ENCODE measurements at regions of chr18 and their contacts with region 1.

Region 1: GRCh38 chr18:78268226-78268988 is 711.2 kb upstream of the SALL3 start:
- DNase-seq: no peak
- ATAC-seq: no peak
- H3K4me3 ChIP-seq: no peak overlapping the region
- H3K27ac ChIP-seq: no peak overlapping the region
- H3K4me1 ChIP-seq: no peaks in the 10 kb centered on the region
- H3K27me3 ChIP-seq: no peaks in the 10 kb centered on the region
- CTCF ChIP-seq: no peak

Region 2: DNA sequence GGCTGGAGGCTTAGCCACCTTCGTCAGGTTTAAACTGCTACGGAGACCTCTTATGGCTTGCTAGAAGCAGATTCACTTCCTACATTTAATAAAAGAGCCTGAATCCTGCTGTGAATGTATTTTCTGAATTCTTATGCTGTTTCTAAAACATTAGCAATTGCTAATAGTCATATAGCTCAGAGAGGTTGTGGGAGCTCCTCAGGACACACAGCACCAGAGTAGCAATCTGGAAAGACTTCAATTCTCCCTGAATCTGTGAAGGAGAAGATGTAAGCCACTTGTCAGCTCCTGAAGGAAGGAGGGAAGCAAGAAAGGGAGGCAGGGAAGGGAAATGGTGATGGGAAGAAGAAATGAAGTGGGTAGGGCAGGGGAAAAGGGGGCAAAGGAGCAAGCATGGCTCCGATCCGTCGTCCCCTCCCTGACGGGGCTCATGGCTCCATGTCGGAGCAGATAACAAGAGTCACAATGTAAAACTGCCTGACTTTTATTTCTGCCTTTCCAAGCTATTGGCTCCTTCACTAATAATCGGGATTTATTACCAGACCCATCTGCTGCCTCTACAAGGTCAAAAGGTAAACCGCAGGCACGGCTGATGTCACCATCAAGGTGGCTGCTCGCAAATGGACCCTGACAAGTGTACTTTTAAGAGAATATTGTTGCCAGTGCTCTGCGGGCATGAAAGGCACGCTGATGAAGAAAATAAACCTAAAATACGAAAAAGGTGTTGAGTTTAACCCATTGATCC is 55.2 kb after region 1 on chr18:
- intact Hi-C with region 1: loop called in 1 of 2 experiments (anchors 10 kb)
- DNase-seq: no peak
- ATAC-seq: no peak
- H3K4me3 ChIP-seq: no peak overlapping the region
- H3K27ac ChIP-seq: no peak overlapping the region
- H3K4me1 ChIP-seq: no peaks in the 10 kb centered on the region
- H3K27me3 ChIP-seq: no peaks in the 10 kb centered on the region
- CTCF ChIP-seq: no peak

Region 3: GRCh38 chr18:78813936-78814710 is 545.7 kb after region 1 on chr18:
- intact Hi-C with region 1: no loop called
- DNase-seq: peak in 3 of 4 donors; percentile 10 to 57 (median 47)
- ATAC-seq: peak; percentile 86
- H3K4me3 ChIP-seq: no peak overlapping the region
- H3K27ac ChIP-seq: no peak overlapping the region
- H3K4me1 ChIP-seq: no peaks in the 10 kb centered on the region
- H3K27me3 ChIP-seq: peaks cover 3 to 58% of the 10 kb centered on the region in 2 donors
- CTCF ChIP-seq: no peak

Region 4: DNA sequence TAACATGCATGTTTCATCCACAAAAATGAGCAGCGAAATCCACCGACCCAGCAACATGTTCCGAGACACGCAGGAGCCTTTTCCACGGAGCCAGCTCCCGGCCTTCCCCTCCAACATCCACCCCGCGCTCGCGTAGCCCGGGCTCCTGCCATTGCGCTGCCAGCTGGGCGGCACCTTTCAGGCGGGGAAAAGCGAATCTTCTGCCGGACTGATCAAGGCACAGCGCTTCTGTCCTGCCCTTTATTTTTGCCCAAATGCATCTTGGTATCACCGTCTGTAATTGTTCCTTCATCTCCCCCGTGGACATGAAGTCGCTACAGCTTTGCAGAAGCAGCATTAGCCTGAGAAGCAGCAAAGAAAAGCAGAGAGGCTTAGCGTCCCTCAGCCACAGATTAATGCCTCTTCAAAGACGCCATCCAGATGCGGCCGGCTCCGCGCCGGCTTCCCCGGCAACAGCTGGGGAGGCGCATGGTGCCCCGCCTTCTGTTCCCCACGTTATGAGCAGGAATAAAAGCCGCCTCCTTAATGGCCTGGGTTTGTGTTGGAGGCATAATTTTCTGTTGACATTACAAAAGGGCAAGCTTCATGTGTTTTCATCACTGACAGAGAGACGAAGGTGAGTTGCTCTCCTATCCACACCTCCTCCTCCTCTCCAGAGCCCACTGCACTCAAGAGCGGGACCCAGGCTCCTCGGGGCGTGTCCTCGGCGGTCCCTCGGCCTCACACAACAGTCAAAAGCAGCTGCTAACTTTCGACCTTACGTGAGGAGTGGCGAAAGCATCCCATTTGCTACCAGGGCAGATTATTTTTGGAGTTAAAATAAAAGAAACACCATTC is 589.1 kb after region 1 on chr18:
- intact Hi-C with region 1: no loop called
- DNase-seq: no peak
- ATAC-seq: no peak
- H3K4me3 ChIP-seq: no peak overlapping the region
- H3K27ac ChIP-seq: no peak overlapping the region
- H3K4me1 ChIP-seq: no peaks in the 10 kb centered on the region
- H3K27me3 ChIP-seq: peaks cover 0 to 58% of the 10 kb centered on the region in 2 donors
- CTCF ChIP-seq: no peak